ENCODE measurements at regions of chr1 and their contacts with region 1.

Region 1: DNA sequence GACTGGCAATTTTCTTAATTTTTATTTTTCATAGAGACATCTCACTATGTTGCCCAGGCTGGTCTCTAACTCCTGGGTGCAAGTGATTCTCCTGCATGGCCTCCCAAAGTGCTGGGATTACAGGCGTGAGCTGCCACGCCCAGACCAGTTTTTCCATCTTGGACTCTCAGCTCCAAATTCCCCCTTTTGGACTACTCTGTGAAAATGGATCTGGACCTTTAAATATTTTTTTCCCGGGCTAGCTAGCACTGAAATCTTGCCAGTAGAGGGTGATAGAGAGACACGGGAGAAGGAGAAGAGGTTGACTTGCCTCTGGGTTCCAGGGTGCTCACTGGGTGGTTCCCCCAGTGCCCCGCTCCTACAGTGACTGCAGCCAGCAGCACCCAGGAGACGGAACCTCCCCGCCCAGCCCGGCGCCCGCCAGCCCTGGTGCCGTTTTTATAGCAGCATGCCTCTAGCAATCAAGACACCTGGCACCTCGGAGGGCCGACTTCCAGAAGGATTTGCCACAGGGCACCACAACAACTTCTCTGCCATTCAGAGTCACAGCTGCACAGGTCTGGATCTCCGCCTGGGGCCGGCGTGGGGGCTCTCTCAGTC is 34.7 kb upstream of the SCCPDH start:
- DNase-seq: peak; percentile 88
- H3K4me3 ChIP-seq: peak overlapping the region; percentile 38 to 50
- H3K27ac ChIP-seq: no peak overlapping the region
- H3K4me1 ChIP-seq: no peaks in the 10 kb centered on the region; a peak in 1 of 4 replicates
- H3K27me3 ChIP-seq: no peaks in the 10 kb centered on the region
- CTCF ChIP-seq: peak; percentile 92
- EP300 ChIP-seq: no peak
- RAD21 ChIP-seq: peak; percentile 76

Region 2: GRCh38 chr1:246497331-246497915 is 192.1 kb before region 1 on chr1:
- CTCF ChIA-PET with region 1: interaction called, 11 read pairs
- POLR2A ChIA-PET with region 1: no interaction called
- DNase-seq: peak; percentile 64
- H3K4me3 ChIP-seq: no peak overlapping the region
- H3K27ac ChIP-seq: no peak overlapping the region
- H3K4me1 ChIP-seq: peaks cover under 1 to 1% of the 10 kb centered on the region in 2 experiments; a peak in 2 of 4 replicates
- H3K27me3 ChIP-seq: no peaks in the 10 kb centered on the region
- CTCF ChIP-seq: peak; percentile 86
- EP300 ChIP-seq: no peak
- RAD21 ChIP-seq: peak; percentile 70

Region 3: DNA sequence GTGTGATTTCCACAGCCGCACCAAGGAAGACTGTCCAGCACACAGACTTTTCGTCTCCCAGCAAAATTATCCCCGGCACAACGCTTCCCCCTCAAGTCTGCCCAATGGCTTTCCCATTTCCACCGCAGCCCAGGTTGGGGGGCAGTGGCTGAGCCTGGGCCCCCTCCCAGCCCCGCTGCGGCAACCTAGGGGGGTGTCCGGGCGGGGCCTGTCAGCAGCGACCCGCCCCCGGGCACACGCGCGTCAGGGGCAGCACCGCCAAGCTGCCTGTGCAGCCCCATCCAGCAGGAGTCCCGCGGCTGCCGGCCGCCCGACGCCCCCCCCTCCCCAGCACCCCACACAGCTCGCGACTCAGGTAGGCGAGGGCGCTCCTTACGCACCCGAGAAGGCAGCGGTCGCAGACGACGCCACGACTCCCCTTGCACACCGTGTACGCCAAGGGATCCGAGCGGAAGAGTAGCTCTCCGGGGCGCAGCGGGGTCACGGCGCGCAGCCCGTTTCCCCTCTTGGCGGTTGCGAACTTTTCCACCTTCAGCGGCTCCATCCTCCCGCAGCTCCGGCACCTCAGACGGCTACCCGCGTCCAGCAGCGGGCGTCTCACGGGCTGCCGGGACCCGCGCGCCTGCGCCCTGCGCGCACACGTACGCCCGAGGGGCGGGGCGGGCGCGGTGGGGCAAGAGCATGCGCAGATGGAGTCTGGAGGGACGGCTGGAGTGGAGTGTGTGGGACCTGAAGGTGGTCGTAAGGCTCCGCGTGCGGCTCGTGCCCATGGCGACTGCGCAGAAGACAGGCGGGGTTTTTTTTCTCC is 182.6 kb before region 1 on chr1 and contains the start of gene SMYD3:
- CTCF ChIA-PET with region 1: interaction called, 18 read pairs
- POLR2A ChIA-PET with region 1: no interaction called
- DNase-seq: peak; percentile 98
- H3K4me3 ChIP-seq: peak within 1 kb of the TSS; percentile 86 to 93
- H3K27ac ChIP-seq: peak within 1 kb of the TSS in 1 of 2 experiments; percentile 72; a peak in 1 of 4 replicates
- H3K4me1 ChIP-seq: peaks cover 0 to 7% of the 10 kb centered on the region in 2 experiments; a peak in 2 of 4 replicates
- H3K27me3 ChIP-seq: no peaks in the 10 kb centered on the region
- CTCF ChIP-seq: peak; percentile 28
- EP300 ChIP-seq: no peak
- RAD21 ChIP-seq: no peak
- polyA plus RNA-seq, gene SMYD3: 31.4 and 37.1 TPM in 2 replicates

Region 4: GRCh38 chr1:246705368-246705767 is 15.9 kb after region 1 on chr1:
- CTCF ChIA-PET with region 1: interaction called, 18 read pairs
- POLR2A ChIA-PET with region 1: no interaction called
- DNase-seq: no peak
- H3K4me3 ChIP-seq: no peak overlapping the region
- H3K27ac ChIP-seq: peak overlapping the region; percentile 48 to 94; a peak in 3 of 4 replicates
- H3K4me1 ChIP-seq: peaks cover 0 to 4% of the 10 kb centered on the region in 2 experiments; a peak in 1 of 4 replicates
- H3K27me3 ChIP-seq: no peaks in the 10 kb centered on the region
- CTCF ChIP-seq: no peak
- EP300 ChIP-seq: peak in 1 of 2 experiments; percentile 72; a peak in 2 of 4 replicates
- RAD21 ChIP-seq: no peak

Region 5: DNA sequence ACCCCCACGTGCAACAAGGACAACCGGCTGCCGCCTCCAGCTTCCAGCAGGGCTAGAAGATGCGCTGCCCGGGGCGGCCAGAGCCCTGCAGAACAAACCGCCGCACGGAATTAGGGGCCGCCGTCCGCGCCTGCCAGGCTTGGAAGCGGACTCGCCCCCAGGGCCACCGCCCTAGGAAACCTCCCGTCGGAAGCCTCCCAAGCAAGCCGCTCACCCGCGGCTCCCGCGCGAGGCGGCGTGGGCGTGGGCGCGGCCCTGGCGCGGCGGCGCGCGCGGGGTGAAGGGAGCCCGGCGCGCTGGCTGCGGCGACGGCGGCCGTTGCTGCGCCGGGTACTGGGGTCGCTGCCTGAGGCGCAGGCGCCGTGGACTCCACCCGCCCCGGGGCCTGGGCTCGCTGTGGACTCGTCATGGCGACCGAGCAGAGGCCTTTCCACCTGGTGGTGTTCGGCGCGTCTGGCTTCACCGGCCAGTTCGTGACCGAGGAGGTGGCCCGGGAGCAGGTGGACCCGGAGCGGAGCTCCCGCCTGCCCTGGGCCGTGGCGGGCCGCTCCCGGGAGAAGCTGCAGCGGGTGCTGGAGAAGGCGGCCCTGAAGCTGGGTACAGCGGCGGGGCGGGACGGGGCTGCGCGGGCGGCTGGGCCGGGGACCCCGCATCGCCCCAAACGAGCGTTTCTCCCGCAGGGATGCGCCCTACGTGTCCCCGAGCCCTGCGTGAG is 34.7 kb after region 1 on chr1 and contains the start of gene SCCPDH:
- CTCF ChIA-PET with region 1: interaction called, 10 read pairs
- POLR2A ChIA-PET with region 1: no interaction called
- DNase-seq: peak; percentile 96
- H3K4me3 ChIP-seq: peak within 1 kb of the TSS; percentile 85 to 92
- H3K27ac ChIP-seq: peak within 1 kb of the TSS; percentile 86 to 88
- H3K4me1 ChIP-seq: peaks cover 0 to 8% of the 10 kb centered on the region in 2 experiments; a peak in 2 of 4 replicates
- H3K27me3 ChIP-seq: no peaks in the 10 kb centered on the region
- CTCF ChIP-seq: no peak
- EP300 ChIP-seq: no peak
- RAD21 ChIP-seq: no peak
- polyA plus RNA-seq, gene SCCPDH: 32.2 and 36.0 TPM in 2 replicates

Region 6: DNA sequence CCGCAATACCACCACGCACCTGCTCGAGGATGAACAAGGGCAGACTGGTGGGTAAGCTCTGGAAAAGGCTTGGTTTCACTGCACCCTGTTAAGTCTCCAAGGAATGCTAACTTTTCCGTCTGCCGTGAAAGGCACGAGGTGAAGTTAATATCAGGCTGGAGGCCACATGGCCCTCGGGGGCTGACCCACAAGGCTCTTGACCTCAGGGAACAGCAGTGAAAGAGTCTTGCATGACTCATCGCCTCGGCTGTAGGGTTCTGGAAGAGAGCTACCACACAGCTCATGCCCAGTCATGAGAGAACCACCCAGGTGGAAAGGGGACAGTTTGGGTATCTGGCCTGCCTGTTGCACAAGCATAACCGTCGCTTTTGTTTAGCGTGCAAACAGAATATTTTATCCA is 59.4 kb after region 1 on chr1:
- CTCF ChIA-PET with region 1: interaction called, 20 read pairs
- POLR2A ChIA-PET with region 1: no interaction called
- DNase-seq: no peak
- H3K4me3 ChIP-seq: no peak overlapping the region
- H3K27ac ChIP-seq: no peak overlapping the region
- H3K4me1 ChIP-seq: no peaks in the 10 kb centered on the region
- H3K27me3 ChIP-seq: no peaks in the 10 kb centered on the region
- CTCF ChIP-seq: no peak
- EP300 ChIP-seq: no peak
- RAD21 ChIP-seq: no peak

Region 7: GRCh38 chr1:246753670-246754535 is 64.4 kb after region 1 on chr1:
- CTCF ChIA-PET with region 1: interaction called, 20 read pairs
- POLR2A ChIA-PET with region 1: no interaction called
- DNase-seq: peak; percentile 75
- H3K4me3 ChIP-seq: no peak overlapping the region; a peak in 1 of 4 replicates
- H3K27ac ChIP-seq: no peak overlapping the region
- H3K4me1 ChIP-seq: no peaks in the 10 kb centered on the region; a peak in 1 of 4 replicates
- H3K27me3 ChIP-seq: no peaks in the 10 kb centered on the region
- CTCF ChIP-seq: peak; percentile 82
- EP300 ChIP-seq: no peak
- RAD21 ChIP-seq: peak; percentile 87

Region 8: GRCh38 chr1:246987083-246987690 is 297.7 kb after region 1 on chr1:
- CTCF ChIA-PET with region 1: no interaction called
- POLR2A ChIA-PET with region 1: no interaction called
- DNase-seq: no peak
- H3K4me3 ChIP-seq: no peak overlapping the region
- H3K27ac ChIP-seq: no peak overlapping the region
- H3K4me1 ChIP-seq: no peaks in the 10 kb centered on the region
- H3K27me3 ChIP-seq: no peaks in the 10 kb centered on the region
- CTCF ChIP-seq: no peak
- EP300 ChIP-seq: no peak
- RAD21 ChIP-seq: no peak

Measured in SK-N-SH (cell line).